CD8-positive, alpha-beta T cell (primary cell): ENCODE measurements at regions of chr22 and their contacts with region 1.

Region 1: DNA sequence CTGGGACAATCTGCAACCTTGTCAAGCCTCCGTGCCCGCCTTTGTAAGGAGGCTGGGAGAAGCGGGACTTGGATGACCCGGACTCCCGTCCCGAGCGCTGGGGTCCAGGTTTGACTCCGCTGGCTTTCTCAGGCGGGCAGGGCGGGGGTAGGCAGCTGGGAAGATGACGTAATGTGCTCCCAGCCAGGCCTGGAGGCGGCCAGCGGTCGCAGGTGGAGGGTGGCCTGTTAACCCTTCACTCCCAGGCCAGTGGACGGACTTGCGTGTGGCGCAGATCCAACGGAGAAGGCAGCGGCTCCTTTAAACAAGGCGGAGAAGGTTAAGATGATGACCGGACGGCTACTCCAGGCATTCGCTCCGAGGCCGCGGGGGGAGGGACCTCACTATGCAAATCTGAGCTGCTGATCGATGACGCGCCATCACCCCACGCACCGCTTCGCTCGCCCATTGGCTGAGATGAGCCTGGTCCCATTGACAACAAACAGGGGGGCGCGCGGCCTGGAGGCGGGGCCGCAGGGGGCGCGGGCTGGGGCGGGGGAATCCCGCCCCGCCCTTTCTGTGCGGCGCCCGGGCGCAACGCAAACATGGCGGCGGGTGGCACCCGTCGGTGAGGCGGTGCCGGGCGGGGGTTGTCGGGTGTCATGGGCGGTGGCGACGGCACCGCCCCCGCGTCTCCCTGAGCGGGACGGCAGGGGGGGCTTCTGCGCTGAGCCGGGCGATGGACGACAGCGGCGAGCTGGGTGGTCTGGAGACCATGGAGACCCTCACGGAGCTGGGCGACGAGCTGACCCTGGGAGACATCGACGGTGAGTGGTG is at the start of gene SREBF2:
- DNase-seq: peak; percentile 97 to 100 (median 99)
- ATAC-seq: peak; percentile 94
- H3K4me3 ChIP-seq: peak within 1 kb of the TSS; percentile 76 to 84
- H3K4me3 Mint-ChIP-seq: peak within 1 kb of the TSS; percentile 97
- H3K27ac ChIP-seq: peak within 1 kb of the TSS; percentile 85 to 97
- H3K27ac Mint-ChIP-seq: peak within 1 kb of the TSS; percentile 100
- H3K4me1 ChIP-seq: peaks cover 15% of the 10 kb centered on the region
- H3K4me1 Mint-ChIP-seq: peaks cover 31% of the 10 kb centered on the region
- H3K27me3 ChIP-seq: no peaks in the 10 kb centered on the region
- H3K27me3 Mint-ChIP-seq: no peaks in the 10 kb centered on the region
- CTCF ChIP-seq: no peak
- total RNA-seq, gene SREBF2: 109 to 122 TPM

Region 2: DNA sequence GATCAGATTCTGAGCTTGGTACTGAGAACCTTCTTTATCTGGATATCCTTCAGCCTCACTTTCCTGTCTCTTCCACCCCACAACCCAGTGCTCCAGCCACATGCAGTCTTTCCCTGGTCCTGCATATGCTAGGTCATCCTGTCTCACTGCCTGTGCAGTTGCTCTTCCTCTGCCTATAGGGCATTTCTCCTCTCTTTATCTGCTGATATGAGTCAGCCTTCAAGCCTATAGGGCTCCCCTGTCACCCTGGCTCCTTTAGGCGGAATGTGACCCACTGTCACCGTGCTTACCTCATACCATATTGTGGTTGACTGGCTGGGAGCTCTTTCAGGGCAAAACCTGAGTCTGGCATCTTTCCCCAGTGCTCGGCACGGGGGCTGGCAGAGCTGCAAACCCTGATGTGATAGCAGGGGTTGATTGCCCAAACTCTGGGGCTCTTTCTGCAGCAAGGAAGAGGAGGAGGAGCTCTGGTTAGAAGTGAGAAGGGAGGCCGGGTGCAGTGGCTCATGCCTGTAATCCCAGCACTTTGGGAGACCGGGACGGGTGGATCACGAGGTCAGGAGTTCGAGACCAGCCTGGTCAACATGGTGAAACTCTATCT is 107.2 kb before region 1 on chr22:
- CTCF ChIA-PET with region 1: no interaction called
- POLR2A ChIA-PET with region 1: no interaction called
- intact Hi-C with region 1: no loop called
- DNase-seq: no peak
- ATAC-seq: no peak
- H3K4me3 ChIP-seq: no peak overlapping the region
- H3K4me3 Mint-ChIP-seq: no peak overlapping the region
- H3K27ac ChIP-seq: no peak overlapping the region
- H3K27ac Mint-ChIP-seq: no peak overlapping the region
- H3K4me1 ChIP-seq: no peaks in the 10 kb centered on the region
- H3K4me1 Mint-ChIP-seq: no peaks in the 10 kb centered on the region
- H3K27me3 ChIP-seq: no peaks in the 10 kb centered on the region
- H3K27me3 Mint-ChIP-seq: no peaks in the 10 kb centered on the region
- CTCF ChIP-seq: no peak

Region 3: GRCh38 chr22:41780746-41781505 is 51.8 kb before region 1 on chr22:
- CTCF ChIA-PET with region 1: interaction called, 3 read pairs
- POLR2A ChIA-PET with region 1: interaction called, 31 read pairs
- intact Hi-C with region 1: loop called (anchors 1 to 2 kb)
- DNase-seq: peak; percentile 77 to 99 (median 90)
- ATAC-seq: peak; percentile 92
- H3K4me3 ChIP-seq: peak overlapping the region; percentile 64 to 69
- H3K4me3 Mint-ChIP-seq: peak overlapping the region; percentile 89
- H3K27ac ChIP-seq: peak overlapping the region; percentile 86
- H3K27ac Mint-ChIP-seq: peak overlapping the region; percentile 99
- H3K4me1 ChIP-seq: peaks cover 32% of the 10 kb centered on the region
- H3K4me1 Mint-ChIP-seq: peaks cover 57% of the 10 kb centered on the region
- H3K27me3 ChIP-seq: no peaks in the 10 kb centered on the region
- H3K27me3 Mint-ChIP-seq: no peaks in the 10 kb centered on the region
- CTCF ChIP-seq: no peak

Region 4: GRCh38 chr22:41857155-41857859 is 24.5 kb after region 1 on chr22:
- CTCF ChIA-PET with region 1: interaction called, 13 read pairs
- POLR2A ChIA-PET with region 1: interaction called, 20 read pairs
- intact Hi-C with region 1: loop called (anchors 1 kb)
- DNase-seq: peak; percentile 31 to 91 (median 72)
- ATAC-seq: peak; percentile 70
- H3K4me3 ChIP-seq: no peak overlapping the region
- H3K4me3 Mint-ChIP-seq: no peak overlapping the region
- H3K27ac ChIP-seq: peak overlapping the region; percentile 20 to 67
- H3K27ac Mint-ChIP-seq: peak overlapping the region; percentile 84
- H3K4me1 ChIP-seq: peaks cover 30% of the 10 kb centered on the region
- H3K4me1 Mint-ChIP-seq: peaks cover 59% of the 10 kb centered on the region
- H3K27me3 ChIP-seq: no peaks in the 10 kb centered on the region
- H3K27me3 Mint-ChIP-seq: no peaks in the 10 kb centered on the region
- CTCF ChIP-seq: peak; percentile 76

Region 5: DNA sequence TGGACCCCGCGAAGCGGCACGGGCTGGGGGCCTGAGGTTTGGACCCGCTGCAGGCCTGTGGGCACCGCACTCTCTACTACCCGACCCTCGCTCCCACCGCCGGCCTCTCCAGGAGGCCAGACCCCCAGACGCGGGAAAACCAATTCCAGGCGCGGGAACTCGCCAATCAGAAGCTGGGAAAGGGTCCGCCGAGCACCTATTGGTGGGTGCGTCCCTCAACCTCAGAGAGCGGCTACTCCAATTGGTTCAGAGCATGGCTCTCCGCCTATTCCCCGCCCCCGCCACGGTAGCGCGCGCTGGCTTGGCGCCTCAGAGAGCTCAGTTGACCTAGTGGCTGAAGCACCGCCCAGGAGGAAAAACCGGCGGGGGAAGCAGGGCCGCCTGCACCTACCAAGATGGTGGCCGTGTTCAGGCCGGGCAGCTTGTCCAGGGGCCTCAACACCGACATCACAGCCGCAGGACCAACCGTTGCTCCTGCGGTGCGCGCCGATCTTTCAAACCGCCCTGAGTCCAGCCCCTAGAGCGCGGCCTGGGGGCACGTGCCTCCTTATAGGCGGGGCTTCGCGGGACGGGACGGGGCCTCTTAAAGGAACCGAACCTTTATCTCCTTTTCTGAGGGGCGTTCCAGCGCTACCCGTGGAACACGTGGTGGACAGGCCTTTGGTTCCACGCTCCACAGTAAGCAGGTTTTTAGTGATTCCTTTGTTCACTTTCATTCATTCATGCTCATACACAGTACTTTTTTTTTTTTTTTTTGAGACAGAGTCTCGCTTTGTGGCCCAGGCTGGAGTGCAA is 114.1 kb after region 1 on chr22 and contains the start of gene CENPM:
- CTCF ChIA-PET with region 1: interaction called, 16 read pairs
- POLR2A ChIA-PET with region 1: interaction called, 48 read pairs
- intact Hi-C with region 1: loop called in 1 of 2 experiments (anchors 1 kb)
- DNase-seq: peak; percentile 65 to 89 (median 84)
- ATAC-seq: peak; percentile 94
- H3K4me3 ChIP-seq: peak within 1 kb of the TSS; percentile 75 to 87
- H3K4me3 Mint-ChIP-seq: peak within 1 kb of the TSS; percentile 91
- H3K27ac ChIP-seq: peak within 1 kb of the TSS in 1 of 2 experiments; percentile 4
- H3K27ac Mint-ChIP-seq: no peak within 1 kb of the TSS
- H3K4me1 ChIP-seq: peaks cover 19% of the 10 kb centered on the region
- H3K4me1 Mint-ChIP-seq: peaks cover 13% of the 10 kb centered on the region
- H3K27me3 ChIP-seq: peaks cover 0 to 2% of the 10 kb centered on the region in 2 experiments
- H3K27me3 Mint-ChIP-seq: no peaks in the 10 kb centered on the region
- CTCF ChIP-seq: no peak
- total RNA-seq, gene CENPM: 9.4 to 10.9 TPM

Region 6: DNA sequence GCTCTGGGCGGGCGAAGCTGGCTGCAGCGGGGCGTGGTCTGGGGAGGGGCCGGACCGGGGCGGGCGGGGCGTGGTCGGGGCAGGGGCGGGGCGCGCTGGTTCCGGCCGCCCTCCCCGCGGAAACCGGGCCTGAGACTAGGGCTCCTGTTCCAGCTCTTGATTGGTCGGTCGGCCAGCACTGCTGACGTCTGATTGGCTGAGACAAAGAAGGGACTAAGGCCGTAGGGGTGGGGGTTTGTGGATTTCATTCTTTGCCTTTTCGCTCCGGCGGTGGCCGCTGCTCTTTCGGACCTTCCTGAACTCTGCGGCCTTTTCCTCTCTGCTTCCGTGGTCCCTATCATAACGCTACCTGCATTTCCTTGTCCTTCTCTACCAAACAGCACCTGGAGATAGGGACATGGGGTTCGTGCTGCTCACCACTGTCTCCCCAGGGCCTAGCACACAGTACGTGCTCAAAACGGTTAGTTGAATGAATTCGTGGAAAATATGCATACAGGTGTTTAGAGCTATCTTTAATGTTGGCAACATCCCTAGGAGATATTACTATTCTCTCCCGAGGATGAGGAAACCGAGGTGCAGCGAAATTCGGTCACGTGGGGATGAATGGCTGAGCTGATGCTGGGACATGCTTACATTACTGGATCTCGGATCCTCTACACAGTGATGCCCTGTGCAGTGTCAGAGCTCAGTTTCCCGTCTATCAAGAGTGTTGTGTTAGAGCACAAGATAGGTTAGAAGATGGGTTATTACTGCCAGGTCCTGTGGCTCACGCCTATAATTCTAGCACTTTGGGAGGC is 536.7 kb after region 1 on chr22:
- CTCF ChIA-PET with region 1: no interaction called
- POLR2A ChIA-PET with region 1: no interaction called
- intact Hi-C with region 1: no loop called
- DNase-seq: peak; percentile 49 to 91 (median 82)
- ATAC-seq: peak; percentile 97
- H3K4me3 ChIP-seq: peak overlapping the region; percentile 60 to 86
- H3K4me3 Mint-ChIP-seq: peak overlapping the region; percentile 85
- H3K27ac ChIP-seq: no peak overlapping the region
- H3K27ac Mint-ChIP-seq: peak overlapping the region; percentile 9
- H3K4me1 ChIP-seq: peaks cover 18% of the 10 kb centered on the region
- H3K4me1 Mint-ChIP-seq: peaks cover 19% of the 10 kb centered on the region
- H3K27me3 ChIP-seq: peaks cover 9 to 24% of the 10 kb centered on the region in 2 experiments
- H3K27me3 Mint-ChIP-seq: peaks cover 23% of the 10 kb centered on the region
- CTCF ChIP-seq: no peak

Region 7: GRCh38 chr22:42444077-42444904 is 611.5 kb after region 1 on chr22:
- CTCF ChIA-PET with region 1: no interaction called
- POLR2A ChIA-PET with region 1: no interaction called
- intact Hi-C with region 1: loop called in 1 of 2 experiments (anchors 5 kb)
- DNase-seq: peak; percentile 58 to 91 (median 78)
- ATAC-seq: peak; percentile 95
- H3K4me3 ChIP-seq: peak overlapping the region; percentile 45 to 47
- H3K4me3 Mint-ChIP-seq: peak overlapping the region; percentile 81
- H3K27ac ChIP-seq: peak overlapping the region; percentile 38 to 58
- H3K27ac Mint-ChIP-seq: peak overlapping the region; percentile 92
- H3K4me1 ChIP-seq: peaks cover 11% of the 10 kb centered on the region
- H3K4me1 Mint-ChIP-seq: peaks cover 22% of the 10 kb centered on the region
- H3K27me3 ChIP-seq: no peaks in the 10 kb centered on the region
- H3K27me3 Mint-ChIP-seq: no peaks in the 10 kb centered on the region
- CTCF ChIP-seq: peak; percentile 36